ENCODE measurements at regions of chr2 and their contacts with region 1.

Region 1: GRCh38 chr2:195818526-195818925 is 161.5 kb downstream of the SLC39A10 start:
- DNase-seq: peak; percentile 72
- ATAC-seq: peak; percentile 90
- H3K4me3 ChIP-seq: no peak overlapping the region; the same call in 1 of the 2 replicates
- H3K27ac ChIP-seq: peak overlapping the region; percentile 71
- H3K4me1 ChIP-seq: peaks cover 39% of the 10 kb centered on the region
- H3K27me3 ChIP-seq: no peaks in the 10 kb centered on the region
- CTCF ChIP-seq: no peak

Region 2: DNA sequence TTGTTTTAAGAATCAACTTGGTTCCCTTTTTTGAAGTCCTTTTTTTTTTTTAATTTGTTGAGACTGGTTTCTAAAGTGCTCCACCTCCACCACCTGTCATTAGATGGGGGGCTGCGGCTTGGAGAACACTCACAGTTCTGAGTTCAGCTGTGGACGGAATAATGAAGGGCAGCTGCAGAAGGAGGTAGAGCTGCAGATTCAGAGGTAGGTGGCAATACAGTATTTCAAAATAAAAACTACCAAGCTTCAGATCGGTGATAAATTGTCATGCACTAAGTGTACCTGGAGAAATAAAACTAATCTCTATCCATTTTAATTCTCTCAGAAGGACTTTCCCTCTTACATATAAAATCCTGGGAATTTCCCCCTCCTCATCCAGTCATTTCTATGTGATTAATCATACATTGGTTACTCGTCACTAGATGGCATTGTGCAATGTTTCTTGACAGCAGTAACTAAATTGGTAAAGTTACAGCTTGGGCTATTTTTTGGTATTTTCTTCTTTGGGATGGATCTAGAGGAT is 242.6 kb before region 1 on chr2:
- CTCF ChIA-PET with region 1: no interaction called
- POLR2A ChIA-PET with region 1: no interaction called
- intact Hi-C with region 1: loop called (anchors 1 kb)
- DNase-seq: peak; percentile 94
- ATAC-seq: peak; percentile 87
- H3K4me3 ChIP-seq: no peak overlapping the region; the same call in 1 of the 2 replicates
- H3K27ac ChIP-seq: peak overlapping the region; percentile 45
- H3K4me1 ChIP-seq: peaks cover 13% of the 10 kb centered on the region
- H3K27me3 ChIP-seq: no peaks in the 10 kb centered on the region
- CTCF ChIP-seq: peak; percentile 59

Region 3: GRCh38 chr2:195664528-195664927 is 154.0 kb before region 1 on chr2:
- CTCF ChIA-PET with region 1: no interaction called
- POLR2A ChIA-PET with region 1: no interaction called
- intact Hi-C with region 1: loop called (anchors 2 kb)
- DNase-seq: peak; percentile 48
- ATAC-seq: peak; percentile 45; the same call in 1 of the 2 replicates
- H3K4me3 ChIP-seq: no peak overlapping the region
- H3K27ac ChIP-seq: no peak overlapping the region
- H3K4me1 ChIP-seq: peaks cover 6% of the 10 kb centered on the region
- H3K27me3 ChIP-seq: no peaks in the 10 kb centered on the region
- CTCF ChIP-seq: peak; percentile 44

Region 4: DNA sequence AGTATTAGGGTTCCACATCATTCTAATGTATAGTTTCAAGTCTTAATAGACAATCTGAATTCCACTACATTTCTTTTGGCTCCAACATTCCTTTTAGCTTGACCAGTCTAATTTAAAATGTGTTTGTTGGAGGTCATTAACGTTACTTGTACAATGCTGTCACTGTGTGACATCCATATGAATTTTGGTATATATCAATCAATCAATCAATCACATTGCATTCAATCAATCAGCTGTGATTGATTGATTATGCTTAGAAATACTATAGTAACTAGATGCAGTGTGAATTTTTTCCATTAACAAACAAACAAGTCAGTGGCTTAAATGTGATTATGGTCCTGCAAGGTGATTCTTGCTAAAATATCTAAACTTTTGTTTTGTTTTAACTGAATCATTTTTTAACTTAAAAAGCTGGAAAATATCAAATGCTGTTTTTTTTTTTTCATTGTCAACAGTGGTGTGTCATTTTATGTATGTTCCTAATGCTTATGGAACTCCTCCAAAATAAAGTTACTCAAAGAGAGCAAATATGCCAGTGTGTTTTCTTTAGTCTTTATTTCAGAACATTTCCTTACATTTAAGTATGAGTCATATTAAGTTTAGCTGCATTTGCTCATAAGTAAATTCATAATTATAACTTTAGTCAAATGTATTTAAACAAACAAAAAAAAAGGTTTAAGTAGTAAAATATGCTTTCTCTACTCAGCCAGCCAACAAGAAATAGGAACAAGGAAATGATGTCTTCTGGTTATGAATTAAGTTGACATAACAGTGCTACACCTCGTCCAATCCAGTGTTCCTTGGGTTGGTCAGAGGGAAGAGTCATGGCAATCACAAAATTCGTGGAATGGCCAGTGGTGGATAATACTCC is 81.1 kb before region 1 on chr2:
- CTCF ChIA-PET with region 1: no interaction called
- POLR2A ChIA-PET with region 1: no interaction called
- intact Hi-C with region 1: loop called (anchors 2 kb)
- DNase-seq: peak; percentile 88
- ATAC-seq: peak; percentile 79
- H3K4me3 ChIP-seq: peak overlapping the region; percentile 13; the same call in 1 of the 2 replicates
- H3K27ac ChIP-seq: peak overlapping the region; percentile 84
- H3K4me1 ChIP-seq: peaks cover 42% of the 10 kb centered on the region
- H3K27me3 ChIP-seq: no peaks in the 10 kb centered on the region
- CTCF ChIP-seq: no peak

Region 5: GRCh38 chr2:195779491-195779890 is 39.0 kb before region 1 on chr2:
- CTCF ChIA-PET with region 1: no interaction called
- POLR2A ChIA-PET with region 1: no interaction called
- intact Hi-C with region 1: loop called (anchors 1 kb)
- DNase-seq: peak; percentile 66
- ATAC-seq: peak; percentile 99
- H3K4me3 ChIP-seq: no peak overlapping the region
- H3K27ac ChIP-seq: no peak overlapping the region
- H3K4me1 ChIP-seq: peaks cover 8% of the 10 kb centered on the region; the same call in 1 of the 2 replicates
- H3K27me3 ChIP-seq: no peaks in the 10 kb centered on the region
- CTCF ChIP-seq: peak; percentile 50; the same call in 1 of the 2 replicates

Region 6: GRCh38 chr2:195795879-195796278 is 22.6 kb before region 1 on chr2:
- CTCF ChIA-PET with region 1: no interaction called
- POLR2A ChIA-PET with region 1: no interaction called
- intact Hi-C with region 1: no loop called
- DNase-seq: peak; percentile 37
- ATAC-seq: peak; percentile 55
- H3K4me3 ChIP-seq: no peak overlapping the region
- H3K27ac ChIP-seq: no peak overlapping the region
- H3K4me1 ChIP-seq: 0 out of 2 replicates have a peak, but pooled peaks cover 6% of the 10 kb centered on the region
- H3K27me3 ChIP-seq: no peaks in the 10 kb centered on the region
- CTCF ChIP-seq: no peak

Region 7: DNA sequence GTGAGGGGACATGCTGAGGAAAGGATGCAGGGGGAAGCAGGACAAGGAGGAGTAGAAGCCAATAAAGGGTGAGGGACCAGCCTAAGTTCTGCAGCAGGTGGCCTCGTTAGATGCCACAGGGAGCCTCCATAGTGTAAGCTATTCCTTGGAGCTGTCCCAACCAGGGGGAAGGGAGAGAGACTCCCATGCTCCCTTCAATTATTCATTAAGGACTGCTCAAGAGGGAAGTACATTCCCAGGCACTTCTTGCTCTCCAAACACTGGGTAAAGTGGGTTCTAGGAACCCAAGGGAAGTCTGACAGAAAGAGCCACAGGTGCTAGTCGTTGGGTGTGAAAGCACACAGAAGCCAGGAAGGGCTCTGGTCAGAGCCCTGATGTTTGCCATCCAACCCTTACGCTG is 32.2 kb after region 1 on chr2:
- CTCF ChIA-PET with region 1: no interaction called
- POLR2A ChIA-PET with region 1: no interaction called
- intact Hi-C with region 1: no loop called
- DNase-seq: no peak
- ATAC-seq: no peak
- H3K4me3 ChIP-seq: no peak overlapping the region
- H3K27ac ChIP-seq: no peak overlapping the region
- H3K4me1 ChIP-seq: no peaks in the 10 kb centered on the region
- H3K27me3 ChIP-seq: no peaks in the 10 kb centered on the region
- CTCF ChIP-seq: no peak

Region 8: DNA sequence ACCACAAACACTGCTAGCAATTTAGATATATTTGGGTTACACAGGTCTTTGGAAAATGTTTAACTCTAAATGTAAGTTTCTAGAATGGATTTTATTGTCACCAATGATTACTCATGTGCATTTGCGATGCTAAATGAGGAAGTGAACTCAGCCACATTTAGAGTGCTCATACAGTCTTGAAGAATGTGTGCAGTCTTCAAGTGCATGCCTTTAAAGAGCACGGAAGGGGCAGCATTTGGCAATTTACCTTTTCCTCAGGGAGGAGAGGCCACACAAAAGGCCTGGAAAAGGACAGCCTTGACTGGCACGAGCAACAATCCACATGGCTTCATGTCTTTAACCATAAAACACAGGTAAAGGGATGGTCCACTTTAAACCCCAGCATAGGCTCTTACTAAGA is 431.3 kb after region 1 on chr2:
- CTCF ChIA-PET with region 1: no interaction called
- POLR2A ChIA-PET with region 1: no interaction called
- intact Hi-C with region 1: loop called (anchors 5 kb)
- DNase-seq: peak; percentile 58
- ATAC-seq: peak; percentile 79
- H3K4me3 ChIP-seq: no peak overlapping the region
- H3K27ac ChIP-seq: no peak overlapping the region
- H3K4me1 ChIP-seq: peaks cover 20% of the 10 kb centered on the region
- H3K27me3 ChIP-seq: no peaks in the 10 kb centered on the region
- CTCF ChIP-seq: no peak

Measured in PC-3 (cell line).